ENCODE measurements at regions of chr13 and their contacts with region 1.

Region 1: DNA sequence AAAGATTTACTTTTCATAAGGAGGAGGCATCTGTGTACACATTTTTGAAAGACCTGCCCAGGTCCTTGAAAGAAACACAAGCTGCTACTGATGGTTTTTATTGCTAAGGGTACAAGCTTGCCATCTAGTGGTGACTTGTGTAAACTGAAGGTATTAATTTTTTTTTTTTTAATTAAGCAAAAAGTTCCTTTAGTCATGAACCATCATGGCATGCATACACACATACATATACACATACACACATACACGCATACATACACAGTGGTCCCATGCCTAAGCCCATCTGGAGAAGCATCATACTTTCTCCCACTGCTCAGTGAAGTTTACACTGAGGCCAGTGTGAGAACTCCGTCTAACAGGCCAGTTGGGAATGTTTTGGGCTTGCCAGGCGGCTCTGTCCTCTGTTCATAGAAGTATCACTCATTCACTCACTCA is 312.5 kb downstream of the DCLK1 start:
- DNase-seq: peak; percentile 60
- ATAC-seq: peak; percentile 77
- H3K4me3 ChIP-seq: no peak overlapping the region
- H3K27ac ChIP-seq: no peak overlapping the region
- H3K4me1 ChIP-seq: no peaks in the 10 kb centered on the region
- H3K27me3 ChIP-seq: no peaks in the 10 kb centered on the region; the same call in 1 of the 2 replicates
- CTCF ChIP-seq: peak; percentile 68
- POLR2A ChIP-seq: no peak
- RAD21 ChIP-seq: peak; percentile 61

Region 2: GRCh38 chr13:35630551-35631275 is 187.9 kb before region 1 on chr13:
- CTCF ChIA-PET with region 1: no interaction called
- POLR2A ChIA-PET with region 1: no interaction called
- dilution Hi-C with region 1: no loop called
- in situ Hi-C with region 1: no loop called
- intact Hi-C with region 1: loop called (anchors 2 kb)
- DNase-seq: peak; percentile 70
- ATAC-seq: peak; percentile 98
- H3K4me3 ChIP-seq: no peak overlapping the region
- H3K27ac ChIP-seq: no peak overlapping the region
- H3K4me1 ChIP-seq: no peaks in the 10 kb centered on the region
- H3K27me3 ChIP-seq: no peaks in the 10 kb centered on the region
- CTCF ChIP-seq: peak; percentile 68
- POLR2A ChIP-seq: no peak
- RAD21 ChIP-seq: peak; percentile 66

Region 3: GRCh38 chr13:35936246-35936978 is 117.8 kb after region 1 on chr13:
- CTCF ChIA-PET with region 1: no interaction called
- POLR2A ChIA-PET with region 1: interaction called, 11 read pairs
- dilution Hi-C with region 1: no loop called
- in situ Hi-C with region 1: no loop called
- intact Hi-C with region 1: no loop called
- DNase-seq: no peak
- ATAC-seq: no peak; the same call in 1 of the 2 replicates
- H3K4me3 ChIP-seq: no peak overlapping the region
- H3K27ac ChIP-seq: no peak overlapping the region
- H3K4me1 ChIP-seq: no peaks in the 10 kb centered on the region
- H3K27me3 ChIP-seq: no peaks in the 10 kb centered on the region
- CTCF ChIP-seq: no peak
- POLR2A ChIP-seq: no peak
- RAD21 ChIP-seq: no peak